Common myeloid progenitor, CD34-positive (primary cell): ENCODE measurements at regions of chr22 and their contacts with region 1.

Region 1: DNA sequence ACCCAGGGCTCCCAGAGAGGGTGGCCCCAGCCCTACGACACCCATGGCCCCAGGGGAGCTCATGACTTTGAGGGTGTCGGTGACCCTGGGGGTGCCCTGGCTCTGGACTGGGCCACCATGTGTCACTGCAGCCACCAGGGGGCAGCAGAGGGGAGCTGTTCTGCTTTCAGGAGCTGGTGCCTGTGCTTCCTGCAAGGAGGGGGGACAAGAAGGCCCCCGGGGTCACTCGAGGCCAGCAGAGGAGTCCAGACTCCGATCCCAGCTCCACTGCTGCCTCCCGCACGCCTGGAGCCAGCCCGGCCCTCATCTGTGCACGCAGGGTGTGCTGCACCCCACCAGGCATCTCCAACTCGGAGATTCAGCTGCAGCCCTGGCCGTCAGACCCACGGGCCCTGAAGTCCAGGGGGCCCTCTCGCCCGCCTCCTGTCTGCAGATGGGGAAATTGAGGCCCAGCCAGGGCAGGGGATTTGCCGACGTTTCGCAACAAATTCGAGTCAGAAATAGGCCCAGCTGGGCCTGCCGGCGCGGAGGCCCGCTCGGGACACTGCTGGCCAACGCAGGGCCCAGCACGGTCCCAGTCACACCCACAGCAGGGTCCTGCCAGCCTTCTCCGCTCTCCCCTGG is 29.5 kb upstream of the WNT7B start:
- DNase-seq: peak; percentile 70 to 85 (median 81)
- H3K4me3 ChIP-seq: peak overlapping the region in 3 of 7 experiments; percentile 8 to 25 (median 11)
- H3K27ac ChIP-seq: no peak overlapping the region
- H3K4me1 ChIP-seq: peaks cover 0 to 39% (median 28%) of the 10 kb centered on the region in 4 experiments
- H3K27me3 ChIP-seq: no peaks in the 10 kb centered on the region

Region 2: GRCh38 chr22:45952151-45952550 is 54.3 kb before region 1 on chr22:
- CTCF ChIA-PET with region 1: no interaction called
- POLR2A ChIA-PET with region 1: no interaction called
- DNase-seq: no peak
- H3K4me3 ChIP-seq: no peak overlapping the region
- H3K27ac ChIP-seq: no peak overlapping the region
- H3K4me1 ChIP-seq: no peaks in the 10 kb centered on the region
- H3K27me3 ChIP-seq: peaks cover 0 to 38% (median 13%) of the 10 kb centered on the region in 5 experiments

Region 3: DNA sequence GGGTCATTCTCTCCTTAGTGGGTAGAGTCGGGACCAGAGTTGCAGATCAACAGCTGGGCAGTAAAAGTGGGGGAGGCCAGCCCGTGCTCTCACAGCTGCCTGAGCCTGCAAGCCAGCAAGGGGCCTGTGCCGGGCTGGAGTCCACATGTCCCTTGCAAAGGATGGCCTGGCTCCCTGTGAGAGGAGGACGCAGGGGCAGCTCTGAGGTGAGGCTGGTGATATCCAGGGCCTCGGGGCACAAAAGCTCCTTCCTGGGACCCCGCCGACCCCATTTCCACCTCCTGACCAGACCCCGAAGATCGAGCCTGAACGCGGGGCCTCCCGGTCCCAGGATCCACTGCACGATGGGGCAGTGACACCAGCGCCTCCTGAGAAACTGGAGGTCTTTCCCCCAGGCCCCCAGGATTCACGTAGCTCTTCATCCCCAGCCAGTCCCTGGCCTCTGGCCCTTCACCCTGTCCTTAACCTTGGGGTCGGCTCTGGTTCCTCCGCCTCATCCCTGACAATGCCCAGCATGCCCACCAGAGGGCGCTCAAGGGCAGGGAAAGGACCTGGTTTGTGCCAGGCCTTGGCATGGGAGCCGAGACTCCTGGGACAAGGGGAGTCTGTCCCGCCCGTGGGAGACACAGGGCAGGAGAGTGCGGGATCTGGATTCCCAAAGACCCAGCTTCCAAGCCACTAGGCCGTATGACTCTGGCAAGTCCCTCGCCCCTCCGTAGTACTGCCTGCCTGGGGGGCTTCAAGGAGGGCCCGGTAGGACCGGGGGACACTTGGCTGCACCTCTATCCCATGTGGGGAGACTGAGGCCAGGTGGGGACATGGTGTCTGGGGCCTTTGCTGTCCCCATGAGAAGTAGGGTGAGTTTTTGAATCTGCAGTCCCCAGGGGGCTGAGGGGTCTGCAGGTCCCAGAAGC is 11.7 kb before region 1 on chr22:
- CTCF ChIA-PET with region 1: interaction called, 83 read pairs
- POLR2A ChIA-PET with region 1: interaction called, 4 read pairs
- DNase-seq: peak in 2 of 3 donors; percentile 48 to 61
- H3K4me3 ChIP-seq: no peak overlapping the region
- H3K27ac ChIP-seq: no peak overlapping the region
- H3K4me1 ChIP-seq: peaks cover 0 to 47% (median 39%) of the 10 kb centered on the region in 4 experiments
- H3K27me3 ChIP-seq: peaks cover 0 to 2% (median 0%) of the 10 kb centered on the region in 5 experiments

Region 4: GRCh38 chr22:46035742-46036557 is 29.5 kb after region 1 on chr22:
- CTCF ChIA-PET with region 1: interaction called, 75 read pairs
- POLR2A ChIA-PET with region 1: interaction called, 7 read pairs
- DNase-seq: peak; percentile 98 to 99 (median 99)
- H3K4me3 ChIP-seq: peak overlapping the region; percentile 63 to 90 (median 87)
- H3K27ac ChIP-seq: peak overlapping the region; percentile 58 to 89
- H3K4me1 ChIP-seq: peaks cover 0 to 55% (median 38%) of the 10 kb centered on the region in 4 experiments
- H3K27me3 ChIP-seq: peaks cover 0 to 2% (median 0%) of the 10 kb centered on the region in 5 experiments

Region 5: GRCh38 chr22:46071451-46072109 is 65.1 kb after region 1 on chr22:
- CTCF ChIA-PET with region 1: interaction called, 27 read pairs
- POLR2A ChIA-PET with region 1: interaction called, 5 read pairs
- DNase-seq: peak; percentile 78 to 92 (median 91)
- H3K4me3 ChIP-seq: peak overlapping the region; percentile 64 to 91 (median 77)
- H3K27ac ChIP-seq: peak overlapping the region; percentile 46 to 78
- H3K4me1 ChIP-seq: peaks cover 3 to 71% (median 36%) of the 10 kb centered on the region in 4 experiments
- H3K27me3 ChIP-seq: peaks cover 0 to 36% (median 0%) of the 10 kb centered on the region in 5 experiments

Region 6: GRCh38 chr22:46110215-46110614 is 103.7 kb after region 1 on chr22:
- CTCF ChIA-PET with region 1: interaction called, 198 read pairs
- POLR2A ChIA-PET with region 1: no interaction called
- DNase-seq: no peak
- H3K4me3 ChIP-seq: no peak overlapping the region
- H3K27ac ChIP-seq: peak overlapping the region in 1 of 2 experiments; percentile 15
- H3K4me1 ChIP-seq: peaks cover 0 to 10% (median 2%) of the 10 kb centered on the region in 4 experiments
- H3K27me3 ChIP-seq: no peaks in the 10 kb centered on the region